A673 (cell line): ENCODE measurements at regions of chr12 and their contacts with region 1.

Region 1: DNA sequence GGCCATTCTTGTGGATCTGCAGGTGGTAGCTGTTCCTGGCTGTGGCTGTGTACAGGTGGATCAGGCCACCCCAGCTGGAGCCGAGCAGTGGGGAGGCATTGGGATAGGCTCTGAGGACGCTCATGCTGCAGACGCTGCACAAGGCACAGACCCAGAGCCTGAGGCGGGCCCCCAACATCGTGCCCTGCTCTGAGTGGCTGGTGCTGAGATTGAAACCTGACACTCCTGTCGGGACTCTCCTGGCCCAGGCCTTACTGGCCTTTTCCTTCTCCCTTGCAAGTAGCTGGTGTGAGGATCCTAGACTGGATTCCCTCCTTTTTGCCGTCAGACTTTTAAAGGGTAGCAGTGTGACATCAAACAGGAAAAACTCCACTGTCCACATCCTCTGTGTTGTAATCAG is at the start of gene FGF23:
- DNase-seq: peak; percentile 63
- H3K4me3 ChIP-seq: no peak within 1 kb of the TSS
- H3K27ac ChIP-seq: no peak within 1 kb of the TSS
- H3K4me1 ChIP-seq: peaks cover 3% of the 10 kb centered on the region
- H3K27me3 ChIP-seq: peaks cover 32% of the 10 kb centered on the region
- CTCF ChIP-seq: no peak
- total RNA-seq, gene FGF23: not detected in 2 replicates

Region 2: GRCh38 chr12:4630262-4630661 is 250.9 kb after region 1 on chr12:
- CTCF ChIA-PET with region 1: interaction called, 10 read pairs
- POLR2A ChIA-PET with region 1: no interaction called
- intact Hi-C with region 1: no loop called
- DNase-seq: no peak
- H3K4me3 ChIP-seq: no peak overlapping the region
- H3K27ac ChIP-seq: no peak overlapping the region
- H3K4me1 ChIP-seq: no peaks in the 10 kb centered on the region
- H3K27me3 ChIP-seq: peaks cover 88% of the 10 kb centered on the region
- CTCF ChIP-seq: no peak